T-cell (primary cell): ENCODE measurements at regions of chr11 and their contacts with region 1.

Region 1: GRCh38 chr11:117178210-117179034 is at the start of gene SIDT2:
- DNase-seq: peak; percentile 73 to 93 (median 86)
- ATAC-seq: peak; percentile 95 to 97 (median 96)
- H3K4me3 ChIP-seq: peak within 1 kb of the TSS; percentile 86 to 88
- H3K4me3 Mint-ChIP-seq: peak within 1 kb of the TSS; percentile 90 to 96 (median 91)
- H3K27ac ChIP-seq: peak within 1 kb of the TSS; percentile 88
- H3K27ac Mint-ChIP-seq: peak within 1 kb of the TSS; percentile 88 to 91
- H3K4me1 ChIP-seq: peaks cover 17 to 34% of the 10 kb centered on the region in 2 experiments
- H3K4me1 Mint-ChIP-seq: peaks cover 29 to 32% (median 31%) of the 10 kb centered on the region in 3 donors
- H3K27me3 ChIP-seq: no peaks in the 10 kb centered on the region
- H3K27me3 Mint-ChIP-seq: no peaks in the 10 kb centered on the region
- total RNA-seq, gene SIDT2: 46.3 to 110 (median 59.5) TPM

Region 2: DNA sequence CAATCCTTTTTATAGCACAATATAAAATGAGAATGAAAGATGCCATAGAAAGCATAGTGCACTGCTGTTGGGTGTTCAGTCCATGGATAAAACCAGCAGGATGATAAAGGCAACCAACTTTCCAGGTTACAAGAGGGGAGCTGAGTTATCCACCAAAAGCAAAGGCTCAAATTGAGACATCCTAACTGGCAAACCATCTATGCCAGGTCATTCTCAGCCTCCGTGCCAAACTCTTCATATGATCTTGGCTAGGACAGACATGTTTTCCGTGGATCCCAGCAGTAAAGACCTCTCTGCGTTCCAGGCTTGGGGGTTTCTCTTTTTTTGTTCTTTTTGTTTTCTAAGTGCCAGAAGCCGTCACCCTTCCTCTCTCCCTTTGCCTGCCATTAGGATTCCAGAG is 333.7 kb before region 1 on chr11:
- CTCF ChIA-PET with region 1: no interaction called
- POLR2A ChIA-PET with region 1: interaction called in 1 of 2 experiments, 10 read pairs
- DNase-seq: no peak
- ATAC-seq: no peak
- H3K4me3 ChIP-seq: no peak overlapping the region
- H3K4me3 Mint-ChIP-seq: no peak overlapping the region
- H3K27ac ChIP-seq: no peak overlapping the region
- H3K27ac Mint-ChIP-seq: no peak overlapping the region
- H3K4me1 ChIP-seq: no peaks in the 10 kb centered on the region
- H3K4me1 Mint-ChIP-seq: peaks cover 3 to 8% (median 4%) of the 10 kb centered on the region in 3 donors
- H3K27me3 ChIP-seq: no peaks in the 10 kb centered on the region
- H3K27me3 Mint-ChIP-seq: no peaks in the 10 kb centered on the region

Region 3: GRCh38 chr11:117143871-117144476 is 34.4 kb before region 1 on chr11 and contains the start of gene PAFAH1B2:
- CTCF ChIA-PET with region 1: interaction called in 1 of 2 experiments, 7 read pairs
- POLR2A ChIA-PET with region 1: interaction called, 4 to 21 read pairs
- DNase-seq: peak; percentile 82 to 96 (median 92)
- ATAC-seq: peak; percentile 91 to 94 (median 92)
- H3K4me3 ChIP-seq: peak within 1 kb of the TSS; percentile 73 to 94
- H3K4me3 Mint-ChIP-seq: peak within 1 kb of the TSS; percentile 96 to 99 (median 98)
- H3K27ac ChIP-seq: peak within 1 kb of the TSS; percentile 72
- H3K27ac Mint-ChIP-seq: peak within 1 kb of the TSS; percentile 94 to 95
- H3K4me1 ChIP-seq: peaks cover 14 to 39% of the 10 kb centered on the region in 2 experiments
- H3K4me1 Mint-ChIP-seq: peaks cover 40 to 45% (median 40%) of the 10 kb centered on the region in 3 donors
- H3K27me3 ChIP-seq: peaks cover 0 to 5% of the 10 kb centered on the region in 2 experiments
- H3K27me3 Mint-ChIP-seq: peaks cover 6 to 11% of the 10 kb centered on the region in 2 donors
- total RNA-seq, gene PAFAH1B2: 44.1 to 55.9 (median 55.6) TPM

Region 4: DNA sequence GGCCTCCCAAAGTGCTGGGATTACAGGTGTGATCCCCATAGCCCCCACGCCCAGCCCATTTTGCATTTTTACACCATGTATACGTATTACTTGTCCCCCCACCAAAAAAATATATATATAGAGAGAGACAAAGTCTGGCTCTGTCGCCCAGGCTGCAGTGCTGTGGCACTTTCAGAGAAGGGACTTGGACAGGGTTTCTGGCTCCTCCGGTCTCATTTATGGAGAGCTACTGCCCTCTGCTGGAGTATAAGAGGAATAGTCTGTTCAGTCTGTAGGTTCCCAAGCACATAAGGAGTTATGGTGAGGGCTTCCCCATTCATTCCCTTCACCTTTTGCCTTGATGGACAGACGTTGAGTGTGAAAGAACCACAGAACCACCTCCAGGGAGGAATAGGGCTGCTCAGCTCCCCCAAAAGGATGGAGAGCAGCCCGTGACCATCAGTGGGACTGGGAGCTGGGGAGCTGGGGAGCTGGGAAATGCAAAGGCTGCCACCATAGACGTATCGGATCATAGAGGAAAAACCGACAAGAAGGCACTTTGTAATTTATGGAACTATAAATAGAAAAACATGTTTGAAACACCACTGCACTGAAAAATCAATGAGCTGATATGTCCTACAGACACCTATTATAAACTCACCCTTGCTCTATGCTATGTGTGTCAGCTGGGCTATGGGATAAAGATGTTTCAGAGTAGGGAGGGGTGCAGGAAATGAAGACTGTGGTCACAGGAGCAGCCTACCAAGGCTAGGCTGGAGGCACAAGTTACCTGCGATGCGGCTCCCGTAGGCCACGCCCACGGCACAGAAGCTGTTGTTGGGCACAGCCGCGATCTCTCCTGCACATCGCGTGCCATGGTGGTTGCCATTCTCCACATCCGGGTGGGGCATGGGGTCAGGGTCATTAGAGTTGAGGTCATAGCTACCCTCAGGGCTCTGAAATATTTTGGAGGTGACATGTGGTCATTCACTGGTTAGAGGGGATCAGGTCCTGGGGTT is 48.3 kb after region 1 on chr11:
- CTCF ChIA-PET with region 1: interaction called, 10 to 38 read pairs
- POLR2A ChIA-PET with region 1: interaction called in 1 of 2 experiments, 9 read pairs
- DNase-seq: peak in 32 of 35 experiments; percentile 16 to 86 (median 36)
- ATAC-seq: peak; percentile 59 to 68 (median 62)
- H3K4me3 ChIP-seq: no peak overlapping the region
- H3K4me3 Mint-ChIP-seq: peak overlapping the region in 1 of 3 donors; percentile 34
- H3K27ac ChIP-seq: peak overlapping the region; percentile 4
- H3K27ac Mint-ChIP-seq: peak overlapping the region; percentile 80 to 84
- H3K4me1 ChIP-seq: peaks cover 14 to 56% of the 10 kb centered on the region in 2 experiments
- H3K4me1 Mint-ChIP-seq: peaks cover 40 to 55% (median 46%) of the 10 kb centered on the region in 3 donors
- H3K27me3 ChIP-seq: no peaks in the 10 kb centered on the region
- H3K27me3 Mint-ChIP-seq: no peaks in the 10 kb centered on the region

Region 5: GRCh38 chr11:117232092-117232878 is 53.9 kb after region 1 on chr11 and contains the start of gene RNF214:
- CTCF ChIA-PET with region 1: interaction called, 10 to 38 read pairs
- POLR2A ChIA-PET with region 1: interaction called in 1 of 2 experiments, 9 read pairs
- DNase-seq: peak; percentile 37 to 87 (median 63)
- ATAC-seq: peak; percentile 80 to 86 (median 81)
- H3K4me3 ChIP-seq: peak within 1 kb of the TSS; percentile 71 to 88
- H3K4me3 Mint-ChIP-seq: peak within 1 kb of the TSS; percentile 96 to 98 (median 98)
- H3K27ac ChIP-seq: peak within 1 kb of the TSS; percentile 93
- H3K27ac Mint-ChIP-seq: peak within 1 kb of the TSS; percentile 99
- H3K4me1 ChIP-seq: peaks cover 16 to 51% of the 10 kb centered on the region in 2 experiments
- H3K4me1 Mint-ChIP-seq: peaks cover 46 to 60% (median 50%) of the 10 kb centered on the region in 3 donors
- H3K27me3 ChIP-seq: no peaks in the 10 kb centered on the region
- H3K27me3 Mint-ChIP-seq: no peaks in the 10 kb centered on the region
- total RNA-seq, gene RNF214: 21.6 to 31.7 (median 30.5) TPM

Region 6: GRCh38 chr11:117796872-117797529 is 618.6 kb after region 1 on chr11 and contains the start of gene DSCAML1:
- CTCF ChIA-PET with region 1: no interaction called
- POLR2A ChIA-PET with region 1: no interaction called
- DNase-seq: peak in 21 of 35 experiments; percentile 12 to 58 (median 33)
- ATAC-seq: peak; percentile 80 to 93 (median 86)
- H3K4me3 ChIP-seq: peak within 1 kb of the TSS; percentile 30 to 49
- H3K4me3 Mint-ChIP-seq: peak within 1 kb of the TSS; percentile 58 to 71 (median 65)
- H3K27ac ChIP-seq: no peak within 1 kb of the TSS
- H3K27ac Mint-ChIP-seq: no peak within 1 kb of the TSS
- H3K4me1 ChIP-seq: peaks cover 0 to 23% of the 10 kb centered on the region in 2 experiments
- H3K4me1 Mint-ChIP-seq: peaks cover 11 to 21% (median 20%) of the 10 kb centered on the region in 3 donors
- H3K27me3 ChIP-seq: peaks cover 9 to 66% of the 10 kb centered on the region in 2 experiments
- H3K27me3 Mint-ChIP-seq: peaks cover 53 to 62% of the 10 kb centered on the region in 2 donors
- total RNA-seq, gene DSCAML1: 0.15 to 2.4 (median 0.96) TPM

Region 7: DNA sequence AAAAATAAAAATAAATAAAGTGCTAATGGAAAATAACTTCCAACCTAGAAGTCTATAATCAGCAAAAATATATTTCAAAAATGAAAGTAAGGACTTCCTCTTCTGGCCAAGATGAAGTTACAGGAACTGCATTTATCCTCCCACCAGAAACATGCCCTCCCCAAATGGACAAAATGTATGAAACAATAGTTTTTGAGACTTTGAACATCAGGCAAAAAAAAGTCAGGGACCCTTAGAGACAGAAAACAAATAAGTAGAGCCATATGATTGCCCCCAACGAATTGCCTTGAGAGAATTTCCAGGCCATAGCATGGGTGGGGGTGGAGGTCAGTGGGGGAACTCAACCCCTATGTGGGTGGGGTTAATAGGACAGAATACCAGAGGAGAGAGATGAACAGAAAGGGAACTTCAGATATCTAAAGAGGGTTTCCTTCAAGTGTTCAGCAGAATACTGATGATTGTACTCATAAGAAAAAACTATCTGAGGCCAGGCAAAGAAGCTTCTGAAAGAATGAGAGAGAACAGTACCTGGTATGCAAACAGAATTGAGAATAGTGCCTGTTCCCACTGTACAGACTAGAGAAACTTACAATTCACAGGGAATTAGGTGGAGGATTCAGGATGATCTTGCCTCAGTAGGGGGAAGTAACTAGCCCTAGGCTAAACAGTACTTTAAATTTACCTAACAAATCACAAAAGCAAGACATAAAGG is 781.2 kb after region 1 on chr11:
- CTCF ChIA-PET with region 1: interaction called in 1 of 2 experiments, 10 read pairs
- POLR2A ChIA-PET with region 1: no interaction called
- DNase-seq: no peak
- ATAC-seq: no peak
- H3K4me3 ChIP-seq: no peak overlapping the region
- H3K4me3 Mint-ChIP-seq: peak overlapping the region in 1 of 3 donors; percentile 2
- H3K27ac ChIP-seq: no peak overlapping the region
- H3K27ac Mint-ChIP-seq: no peak overlapping the region
- H3K4me1 ChIP-seq: peaks cover 3 to 11% of the 10 kb centered on the region in 2 experiments
- H3K4me1 Mint-ChIP-seq: peaks cover 48 to 64% (median 56%) of the 10 kb centered on the region in 3 donors
- H3K27me3 ChIP-seq: no peaks in the 10 kb centered on the region
- H3K27me3 Mint-ChIP-seq: no peaks in the 10 kb centered on the region